ENCODE measurements at regions of chr1 and their contacts with region 1.

Region 1: GRCh38 chr1:181021811-181022434 is 747 bp downstream of the STX6 start:
- DNase-seq: peak in 1 of 2 donors; percentile 82
- H3K4me3 ChIP-seq: peak overlapping the region; percentile 80 to 83
- H3K27ac ChIP-seq: peak overlapping the region; percentile 81 to 88
- H3K4me1 ChIP-seq: peaks cover 0 to 9% of the 10 kb centered on the region in 2 donors
- H3K27me3 ChIP-seq: no peaks in the 10 kb centered on the region
- CTCF ChIP-seq: no peak

Region 2: DNA sequence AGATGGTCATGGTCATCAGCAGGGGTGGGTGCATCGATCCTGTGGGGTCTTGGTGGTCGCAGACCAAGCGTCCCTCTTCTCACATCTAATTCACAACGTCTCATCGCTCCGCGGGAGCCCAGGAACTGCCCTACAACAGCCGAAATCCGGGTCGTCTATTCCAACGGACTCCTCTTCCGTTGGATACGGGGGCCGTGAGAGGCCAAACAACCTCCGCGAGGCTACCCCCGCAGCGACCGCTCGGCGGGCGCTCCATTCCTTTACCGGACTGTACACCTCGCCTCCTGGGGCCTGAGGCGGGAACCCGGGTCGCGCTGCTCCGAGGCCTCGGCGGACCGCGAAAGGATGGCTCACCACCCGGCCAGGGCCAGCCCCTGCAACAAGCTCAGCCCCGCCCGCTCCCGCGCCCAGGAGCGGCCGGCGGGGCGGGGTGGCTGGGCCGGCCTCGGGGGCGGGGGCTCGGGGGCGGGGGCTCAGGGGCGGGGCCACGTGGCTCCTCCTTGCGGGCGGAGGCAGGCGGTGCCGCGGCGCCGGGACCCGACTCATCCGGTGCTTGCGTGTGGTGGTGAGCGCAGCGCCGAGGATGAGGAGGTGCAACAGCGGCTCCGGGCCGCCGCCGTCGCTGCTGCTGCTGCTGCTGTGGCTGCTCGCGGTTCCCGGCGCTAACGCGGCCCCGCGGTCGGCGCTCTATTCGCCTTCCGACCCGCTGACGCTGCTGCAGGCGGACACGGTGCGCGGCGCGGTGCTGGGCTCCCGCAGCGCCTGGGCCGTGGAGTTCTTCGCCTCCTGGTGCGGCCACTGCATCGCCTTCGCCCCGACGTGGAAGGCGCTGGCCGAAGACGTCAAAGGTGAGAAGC is 867.4 kb before region 1 on chr1 and contains the start of gene QSOX1:
- intact Hi-C with region 1: loop called (anchors 5 kb)
- DNase-seq: peak; percentile 59 to 93
- H3K4me3 ChIP-seq: peak within 1 kb of the TSS; percentile 82 to 85
- H3K27ac ChIP-seq: peak within 1 kb of the TSS; percentile 82 to 85
- H3K4me1 ChIP-seq: peaks cover 4 to 17% of the 10 kb centered on the region in 2 donors
- H3K27me3 ChIP-seq: no peaks in the 10 kb centered on the region
- CTCF ChIP-seq: peak in 2 of 3 experiments; percentile 12 to 37
- total RNA-seq, gene QSOX1: 200 TPM

Region 3: GRCh38 chr1:180502360-180503273 is 519.3 kb before region 1 on chr1 and contains the start of gene ACBD6:
- intact Hi-C with region 1: loop called (anchors 10 kb)
- DNase-seq: peak; percentile 24 to 88
- H3K4me3 ChIP-seq: peak within 1 kb of the TSS; percentile 80 to 86
- H3K27ac ChIP-seq: peak within 1 kb of the TSS; percentile 82 to 87
- H3K4me1 ChIP-seq: peaks cover 0 to 11% of the 10 kb centered on the region in 2 donors
- H3K27me3 ChIP-seq: no peaks in the 10 kb centered on the region
- CTCF ChIP-seq: peak in 2 of 3 experiments; percentile 12 to 13
- total RNA-seq, gene ACBD6: 67.7 TPM

Region 4: DNA sequence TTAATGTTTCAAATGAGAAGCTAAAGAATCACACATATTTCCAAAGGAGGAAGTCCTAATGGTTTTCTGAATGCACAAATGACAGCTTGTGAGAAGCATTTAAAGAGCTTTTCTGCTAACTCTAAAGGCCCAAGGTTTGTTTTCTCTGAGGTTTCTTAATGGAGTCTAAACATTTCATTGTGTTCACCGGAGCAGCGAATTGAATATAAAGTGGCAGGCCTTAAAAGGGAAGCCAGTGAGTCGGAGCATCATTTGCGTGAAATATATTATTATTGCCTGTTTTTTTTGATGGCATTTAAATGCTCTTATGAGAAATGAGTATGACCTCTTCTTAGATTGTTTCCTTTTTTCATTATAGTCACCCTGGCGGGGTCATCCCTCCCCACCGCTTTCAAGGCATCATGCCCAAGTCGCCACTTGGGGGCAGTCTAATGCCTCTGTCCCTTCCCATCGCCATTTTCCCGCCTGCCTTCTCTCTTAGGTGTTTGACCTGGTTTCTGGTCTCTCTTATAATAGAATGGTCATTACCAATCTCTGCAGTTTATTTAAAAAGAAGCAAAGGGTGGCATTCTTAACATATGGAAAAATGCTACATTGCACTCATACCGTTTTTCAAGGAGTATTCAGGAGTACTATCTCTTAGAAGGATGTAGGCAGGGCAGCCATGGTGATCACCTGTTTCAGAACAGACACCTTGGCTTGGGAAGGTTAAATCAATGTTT is 488.5 kb before region 1 on chr1:
- intact Hi-C with region 1: loop called (anchors 5 kb)
- DNase-seq: peak in 1 of 2 donors; percentile 79
- H3K4me3 ChIP-seq: no peak overlapping the region
- H3K27ac ChIP-seq: no peak overlapping the region
- H3K4me1 ChIP-seq: peaks cover 8 to 14% of the 10 kb centered on the region in 2 donors
- H3K27me3 ChIP-seq: no peaks in the 10 kb centered on the region
- CTCF ChIP-seq: peak; percentile 70 to 83 (median 77)

Region 5: DNA sequence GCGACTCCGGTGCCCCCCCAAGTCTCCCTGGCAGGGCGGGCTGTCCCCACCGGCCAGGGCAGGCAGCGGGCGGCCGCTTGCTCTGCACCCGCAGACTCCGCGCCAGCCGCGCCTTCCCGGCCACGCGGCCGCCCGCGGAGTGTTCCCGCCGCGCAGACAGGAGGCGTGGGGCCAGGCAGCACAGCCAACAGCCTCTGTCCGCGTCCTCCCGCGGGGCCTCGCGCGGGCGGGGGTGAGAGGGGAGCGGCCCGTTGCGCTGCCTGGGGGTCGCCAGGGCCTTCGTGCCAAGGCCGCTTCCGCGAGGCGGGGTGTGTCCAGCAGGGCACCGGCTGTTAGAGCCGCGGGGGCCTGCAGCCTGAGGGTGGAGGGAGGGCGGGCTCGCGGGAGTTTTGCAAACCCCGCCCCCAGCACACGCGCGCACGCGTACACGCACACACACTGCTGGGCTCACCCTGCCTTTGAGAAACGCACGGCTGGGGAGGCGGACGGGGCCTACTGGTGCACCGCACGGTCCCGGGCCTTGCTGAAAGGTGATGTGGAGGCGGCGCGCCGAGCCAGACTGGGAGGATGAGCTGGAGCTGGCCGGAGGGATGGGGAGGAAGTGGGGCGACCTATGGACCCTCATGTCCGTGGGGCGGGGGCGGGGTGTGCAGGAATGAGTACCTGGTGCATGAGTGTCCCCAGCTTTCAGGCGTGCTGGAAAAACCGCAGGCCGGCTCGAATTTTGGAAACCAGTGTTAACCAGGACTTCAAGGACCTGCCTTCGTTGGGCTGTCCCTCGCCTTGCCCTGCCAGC is 67.7 kb before region 1 on chr1:
- intact Hi-C with region 1: loop called (anchors 5 kb)
- DNase-seq: peak in 1 of 2 donors; percentile 76
- H3K4me3 ChIP-seq: peak overlapping the region; percentile 68 to 71
- H3K27ac ChIP-seq: peak overlapping the region; percentile 28 to 47
- H3K4me1 ChIP-seq: peaks cover 3 to 8% of the 10 kb centered on the region in 2 donors
- H3K27me3 ChIP-seq: no peaks in the 10 kb centered on the region
- CTCF ChIP-seq: peak in 2 of 3 experiments; percentile 19 to 29

Region 6: GRCh38 chr1:181033799-181034451 is 12.0 kb after region 1 on chr1 and contains the start of gene MR1:
- intact Hi-C with region 1: loop called (anchors 1 kb)
- DNase-seq: peak in 1 of 2 donors; percentile 68
- H3K4me3 ChIP-seq: peak within 1 kb of the TSS; percentile 46 to 67
- H3K27ac ChIP-seq: peak within 1 kb of the TSS; percentile 94 to 96
- H3K4me1 ChIP-seq: peaks cover 0 to 28% of the 10 kb centered on the region in 2 donors
- H3K27me3 ChIP-seq: no peaks in the 10 kb centered on the region
- CTCF ChIP-seq: no peak
- total RNA-seq, gene MR1: 19.2 TPM

Region 7: DNA sequence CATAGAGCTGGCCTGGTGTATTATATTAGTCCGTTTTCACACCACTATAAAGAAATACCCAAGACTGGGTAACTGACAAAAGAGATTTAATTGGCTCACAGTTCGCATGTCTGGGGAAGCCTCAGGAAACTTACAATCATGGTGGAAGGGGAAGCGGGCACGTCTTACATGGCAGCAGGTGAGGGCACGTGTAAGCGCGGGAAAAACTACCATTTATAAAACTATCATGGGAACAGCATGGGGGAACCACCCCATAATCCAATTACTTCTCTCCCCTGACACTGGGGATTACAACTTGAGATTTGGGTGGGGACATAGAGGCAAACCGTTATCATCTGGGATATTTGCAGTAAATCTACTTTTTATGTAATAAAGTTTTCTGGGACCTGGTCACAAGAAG is 73.3 kb after region 1 on chr1:
- intact Hi-C with region 1: no loop called
- DNase-seq: no peak
- H3K4me3 ChIP-seq: peak overlapping the region in 1 of 2 donors; percentile 26
- H3K27ac ChIP-seq: peak overlapping the region; percentile 58 to 68
- H3K4me1 ChIP-seq: peaks cover 20 to 57% of the 10 kb centered on the region in 2 donors
- H3K27me3 ChIP-seq: no peaks in the 10 kb centered on the region
- CTCF ChIP-seq: no peak